GM12878 (cell line): ENCODE measurements at regions of chr9 and their contacts with region 1.

Region 1: DNA sequence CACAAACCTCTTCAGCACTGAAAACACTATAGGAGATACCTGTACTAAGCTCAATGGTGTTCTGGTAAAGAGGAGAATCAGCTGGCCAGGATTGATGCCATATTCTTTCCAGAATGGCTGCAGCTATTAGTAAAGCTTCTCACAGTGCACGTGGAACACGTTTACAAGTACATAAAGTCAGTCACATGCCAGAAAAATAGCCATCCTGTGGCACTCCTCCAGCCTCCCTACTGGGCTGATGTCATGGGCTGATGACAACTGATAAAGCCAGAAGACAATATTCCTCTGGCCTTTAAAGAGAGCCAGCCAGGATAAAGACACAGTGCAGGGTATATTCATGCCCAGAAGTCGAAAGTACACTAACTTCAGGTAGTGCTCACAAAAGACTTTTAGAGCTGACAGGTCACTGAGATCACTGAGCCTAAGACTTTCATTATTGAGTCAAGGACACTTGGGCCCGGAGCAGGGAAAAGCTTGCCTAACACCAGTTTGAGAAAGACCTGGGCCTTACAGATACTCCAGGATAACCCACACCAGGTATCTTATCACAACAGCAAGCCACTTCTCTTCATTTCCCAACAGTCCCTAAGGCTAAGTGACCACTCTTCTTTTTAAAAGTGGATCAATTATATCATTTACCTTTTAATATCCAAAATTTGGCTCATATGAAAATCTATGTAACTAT is 29.4 kb downstream of the ABITRAM start:
- DNase-seq: no peak
- ATAC-seq: no peak
- H3K4me3 ChIP-seq: no peak overlapping the region
- H3K27ac ChIP-seq: no peak overlapping the region
- H3K4me1 ChIP-seq: no peaks in the 10 kb centered on the region
- H3K27me3 ChIP-seq: no peaks in the 10 kb centered on the region
- CTCF ChIP-seq: no peak
- EP300 ChIP-seq: no peak
- POLR2A ChIP-seq: no peak
- RAD21 ChIP-seq: no peak

Region 2: DNA sequence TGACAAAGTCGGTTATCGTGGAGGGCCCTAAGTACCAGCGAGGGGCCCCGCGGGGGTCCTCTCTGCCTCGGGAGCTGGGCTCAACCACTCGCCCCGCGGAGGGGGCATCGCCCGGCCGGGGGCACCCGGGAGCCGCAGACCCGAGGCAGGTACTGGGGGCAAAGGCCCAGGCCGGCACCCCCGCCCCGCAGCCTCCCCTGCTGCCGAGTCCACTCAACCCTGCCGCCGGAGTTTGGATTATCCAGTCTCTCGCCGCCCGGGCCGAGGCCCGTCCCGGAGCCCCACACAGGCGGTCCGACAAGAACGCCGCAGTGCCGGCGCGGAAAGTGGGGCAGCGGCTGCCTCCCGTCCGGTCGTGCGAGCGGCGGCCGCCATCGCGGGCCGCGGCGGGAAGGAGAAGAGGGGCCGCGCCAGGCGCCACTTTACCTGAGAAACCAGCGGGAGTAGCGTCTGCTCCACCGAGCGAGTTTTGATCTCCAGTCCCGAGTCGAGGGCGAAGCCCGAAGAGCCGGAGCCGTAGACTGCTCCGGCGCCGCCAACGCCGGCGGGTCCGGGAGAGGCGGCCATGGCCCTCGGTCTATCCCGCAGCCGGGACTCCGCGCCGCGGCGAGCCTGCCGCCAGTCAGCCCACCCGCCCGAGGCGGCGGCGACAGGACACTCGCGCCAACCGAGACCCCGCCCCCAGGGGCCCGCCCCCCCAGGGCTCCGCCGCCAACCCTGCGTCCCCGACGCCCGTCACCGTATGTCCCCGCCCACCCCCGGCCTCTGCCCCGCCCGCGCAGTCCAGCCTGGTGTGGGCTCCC is 49.5 kb after region 1 on chr9 and contains the start of gene CTNNAL1:
- CTCF ChIA-PET with region 1: no interaction called
- POLR2A ChIA-PET with region 1: no interaction called
- RAD21 ChIA-PET with region 1: no interaction called
- SMC1A ChIA-PET with region 1: no interaction called
- in situ Hi-C with region 1: loop called (anchors 5 kb)
- intact Hi-C with region 1: no loop called
- DNase-seq: no peak
- ATAC-seq: peak; percentile 92
- H3K4me3 ChIP-seq: peak within 1 kb of the TSS; percentile 67
- H3K27ac ChIP-seq: peak within 1 kb of the TSS; percentile 54
- H3K4me1 ChIP-seq: peaks cover 25% of the 10 kb centered on the region
- H3K27me3 ChIP-seq: no peaks in the 10 kb centered on the region
- CTCF ChIP-seq: no peak
- EP300 ChIP-seq: no peak
- POLR2A ChIP-seq: peak; percentile 88
- RAD21 ChIP-seq: no peak
- polyA plus RNA-seq, gene CTNNAL1: 27.2 to 48.4 TPM